Activated T-helper 2 cell treated with anti-CD3 and anti-CD28 coated beads, Interferon-gamma antibody, Interleukin-2, Interleukin-4, amounts not matched to agents 10 μg/mL and 5 μg/mL and 100 μg/mL, durations not matched to agents 14 hours and 24 hours and 36 hours (primary cell): ENCODE measurements at regions of chr6 and their contacts with region 1.

Region 1: GRCh38 chr6:70706491-70707123 is 38.9 kb downstream of the SMAP1 start:
- DNase-seq: no peak
- H3K4me3 Mint-ChIP-seq: no peak overlapping the region
- H3K27ac Mint-ChIP-seq: no peak overlapping the region
- H3K4me1 Mint-ChIP-seq: peaks cover 19% of the 10 kb centered on the region
- H3K27me3 Mint-ChIP-seq: no peaks in the 10 kb centered on the region

Region 2: DNA sequence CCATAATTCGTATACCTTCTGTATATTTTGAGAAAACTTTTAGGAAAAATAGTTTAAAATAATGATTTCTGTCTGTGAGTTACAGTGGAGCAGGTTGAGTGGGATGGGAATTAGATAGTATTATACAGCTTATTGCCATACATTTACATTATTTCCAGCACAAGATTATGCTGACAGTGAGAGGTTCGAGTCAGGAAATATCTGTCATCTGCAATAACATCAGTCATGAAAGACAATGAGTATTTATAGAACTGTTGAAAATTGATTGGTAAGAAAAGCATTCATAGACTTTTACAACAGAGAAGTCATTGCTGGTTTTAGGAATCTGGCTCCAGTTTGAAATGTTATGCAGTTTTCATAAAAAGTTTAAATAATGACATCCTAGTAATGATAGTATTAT is 247.4 kb before region 1 on chr6:
- intact Hi-C with region 1: no loop called
- DNase-seq: no peak
- H3K4me3 Mint-ChIP-seq: no peak overlapping the region
- H3K27ac Mint-ChIP-seq: no peak overlapping the region
- H3K4me1 Mint-ChIP-seq: no peaks in the 10 kb centered on the region
- H3K27me3 Mint-ChIP-seq: no peaks in the 10 kb centered on the region

Region 3: DNA sequence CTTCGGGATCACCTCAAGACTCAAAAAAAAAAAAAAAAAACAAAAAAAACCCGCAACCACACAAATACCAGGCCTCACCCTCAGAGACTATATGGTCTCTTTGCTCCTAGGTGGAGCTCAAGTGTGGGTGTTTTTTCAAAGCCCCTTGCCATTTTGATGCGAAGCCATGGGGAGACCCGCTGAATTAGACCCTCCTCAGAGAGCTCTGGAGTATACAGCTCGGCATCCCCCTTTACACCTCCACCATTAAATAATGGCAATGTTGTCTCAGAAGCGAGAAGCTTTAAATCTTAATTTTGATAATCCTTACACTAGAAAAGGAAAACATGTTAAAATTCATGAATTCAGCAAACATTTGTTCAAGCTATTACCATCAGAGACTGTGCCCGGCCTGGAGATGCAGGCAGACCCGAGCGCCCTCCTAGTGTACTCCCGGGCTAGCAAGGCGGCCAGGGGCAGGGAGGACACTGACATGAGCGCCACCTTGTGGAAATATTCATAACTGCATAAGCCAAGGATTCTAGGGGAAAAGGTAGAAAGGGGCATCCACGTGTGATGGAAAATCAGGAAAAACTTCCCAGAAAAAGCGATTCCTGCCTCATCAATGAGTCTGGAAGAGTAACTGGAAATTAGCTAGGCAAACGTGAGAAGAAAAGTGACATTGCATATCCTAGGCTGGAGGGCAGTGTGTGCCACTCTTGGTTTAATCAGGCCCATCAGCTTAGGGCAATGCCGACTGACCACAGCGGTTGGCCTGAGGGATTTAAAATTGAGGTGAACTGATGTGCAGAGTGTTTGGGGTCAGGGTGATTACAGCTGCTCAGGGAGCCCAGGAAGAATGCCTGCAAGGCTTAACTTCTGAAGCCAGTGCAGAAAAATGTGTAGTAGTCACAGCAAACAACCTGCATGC is 177.7 kb after region 1 on chr6:
- intact Hi-C with region 1: loop called (anchors 1 kb)
- DNase-seq: peak; percentile 29
- H3K4me3 Mint-ChIP-seq: no peak overlapping the region
- H3K27ac Mint-ChIP-seq: no peak overlapping the region
- H3K4me1 Mint-ChIP-seq: no peaks in the 10 kb centered on the region
- H3K27me3 Mint-ChIP-seq: peaks cover 5% of the 10 kb centered on the region